ENCODE measurements at regions of chr15 and their contacts with region 1.

Region 1: DNA sequence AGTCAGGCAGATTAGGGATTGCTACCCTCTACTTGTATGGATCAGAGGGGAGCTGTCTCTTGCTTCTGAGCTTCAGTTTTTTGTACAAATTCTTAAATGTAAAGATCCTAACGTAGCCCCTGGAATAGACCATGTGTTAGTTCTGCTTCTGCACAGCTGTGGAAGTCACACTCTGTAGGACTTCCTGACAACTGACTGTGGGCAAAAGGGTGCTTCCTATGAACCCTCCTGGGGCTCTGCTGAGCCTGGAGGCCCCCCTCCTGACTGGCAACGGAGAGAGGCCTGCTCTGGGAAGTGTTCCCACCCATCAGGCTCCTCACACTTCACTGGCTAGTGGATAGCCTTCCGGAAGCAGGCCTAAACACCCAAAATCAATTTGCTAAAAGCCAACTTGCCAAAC is 131.0 kb downstream of the RPLP1 start:
- DNase-seq: no peak
- ATAC-seq: peak; percentile 54

Region 2: DNA sequence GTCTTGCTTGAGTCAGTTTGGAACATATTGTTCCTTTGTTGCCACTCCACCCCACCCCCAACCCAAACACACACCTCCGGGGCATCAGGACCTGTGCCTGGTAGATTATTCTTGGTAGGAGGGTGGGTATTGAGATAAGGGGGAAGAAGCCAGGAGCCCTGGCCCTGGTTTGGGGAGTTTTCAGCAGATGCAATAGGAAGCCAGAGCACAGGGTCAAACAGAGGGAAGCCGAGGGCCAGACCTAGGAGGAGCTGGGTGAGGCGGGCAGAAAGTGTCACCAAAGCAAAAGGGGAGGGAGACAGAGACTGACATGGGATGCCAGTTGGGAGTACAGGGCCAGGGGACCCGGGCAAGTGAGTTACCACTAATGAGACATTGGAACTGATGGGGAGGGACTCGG is 32.1 kb after region 1 on chr15:
- intact Hi-C with region 1: loop called (anchors 1 kb)
- DNase-seq: no peak
- ATAC-seq: no peak